IMR-90 (cell line): ENCODE measurements at regions of chr2 and their contacts with region 1.

Region 1: DNA sequence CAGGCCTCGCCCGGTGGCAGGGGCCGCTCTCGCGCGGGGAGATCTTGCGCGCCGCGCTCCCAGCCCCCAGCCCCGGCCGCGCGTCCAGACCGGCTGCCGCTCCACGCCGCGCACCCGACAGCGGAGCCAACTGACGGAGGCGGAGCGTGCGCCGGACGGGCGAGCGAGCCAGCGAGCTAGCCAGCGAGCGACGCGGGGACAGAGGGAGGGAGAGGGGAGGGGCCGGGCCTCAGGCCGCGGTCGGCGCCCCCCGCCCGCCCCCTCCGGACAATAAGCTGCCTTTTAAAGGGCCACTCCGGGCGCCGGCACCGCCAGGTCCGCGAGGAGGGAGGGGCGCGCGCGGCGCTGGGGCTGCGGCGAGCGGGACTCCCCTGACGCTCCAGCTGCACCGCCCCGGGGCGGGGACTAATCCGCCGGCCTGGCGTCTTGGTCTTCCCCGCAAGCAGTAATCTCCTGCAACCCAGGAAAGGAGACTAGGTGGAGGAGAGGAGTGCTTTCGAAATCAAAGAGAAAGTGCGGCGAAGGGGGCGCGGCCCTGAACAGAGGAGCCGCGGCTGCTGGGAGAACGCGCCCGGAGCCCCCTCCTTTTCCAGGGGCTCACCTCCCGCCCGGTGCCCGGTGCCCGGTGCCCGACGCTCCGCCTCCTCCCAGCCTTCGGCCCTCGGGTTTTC is at the start of gene BIN1:
- DNase-seq: peak; percentile 82
- ATAC-seq: peak; percentile 83
- H3K4me3 ChIP-seq: peak within 1 kb of the TSS; percentile 82
- H3K27ac ChIP-seq: peak within 1 kb of the TSS; percentile 85
- H3K4me1 ChIP-seq: peaks cover 13% of the 10 kb centered on the region
- H3K27me3 ChIP-seq: peaks cover 7% of the 10 kb centered on the region
- CTCF ChIP-seq: no peak
- POLR2A ChIP-seq: peak; percentile 65
- RAD21 ChIP-seq: no peak
- total RNA-seq, gene BIN1: 18.1 and 19.7 TPM in 2 replicates

Region 2: GRCh38 chr2:126657636-126658318 is 449.3 kb before region 1 on chr2:
- CTCF ChIA-PET with region 1: no interaction called
- POLR2A ChIA-PET with region 1: no interaction called
- dilution Hi-C with region 1: no loop called
- in situ Hi-C with region 1: no loop called
- intact Hi-C with region 1: loop called (anchors 5 kb)
- DNase-seq: peak; percentile 99
- ATAC-seq: peak; percentile 75
- H3K4me3 ChIP-seq: no peak overlapping the region
- H3K27ac ChIP-seq: peak overlapping the region; percentile 91
- H3K4me1 ChIP-seq: peaks cover 19% of the 10 kb centered on the region
- H3K27me3 ChIP-seq: no peaks in the 10 kb centered on the region
- CTCF ChIP-seq: no peak; the same call in 1 of the 2 replicates
- POLR2A ChIP-seq: no peak; the same call in 1 of the 2 replicates
- RAD21 ChIP-seq: peak; percentile 1; the same call in 1 of the 2 replicates

Region 3: GRCh38 chr2:127064642-127065250 is 42.3 kb before region 1 on chr2:
- CTCF ChIA-PET with region 1: interaction called, 7 read pairs
- POLR2A ChIA-PET with region 1: no interaction called
- dilution Hi-C with region 1: no loop called
- in situ Hi-C with region 1: no loop called
- intact Hi-C with region 1: loop called (anchors 2 kb)
- DNase-seq: peak; percentile 97
- ATAC-seq: peak; percentile 93
- H3K4me3 ChIP-seq: no peak overlapping the region
- H3K27ac ChIP-seq: peak overlapping the region; percentile 78
- H3K4me1 ChIP-seq: peaks cover 16% of the 10 kb centered on the region
- H3K27me3 ChIP-seq: no peaks in the 10 kb centered on the region
- CTCF ChIP-seq: peak; percentile 60
- POLR2A ChIP-seq: peak; percentile 62
- RAD21 ChIP-seq: peak; percentile 73

Region 4: GRCh38 chr2:127080938-127081755 is 25.9 kb before region 1 on chr2:
- CTCF ChIA-PET with region 1: interaction called, 3 read pairs
- POLR2A ChIA-PET with region 1: no interaction called
- dilution Hi-C with region 1: no loop called
- in situ Hi-C with region 1: no loop called
- intact Hi-C with region 1: loop called (anchors 1 kb)
- DNase-seq: no peak
- ATAC-seq: no peak
- H3K4me3 ChIP-seq: no peak overlapping the region
- H3K27ac ChIP-seq: no peak overlapping the region
- H3K4me1 ChIP-seq: peaks cover 49% of the 10 kb centered on the region
- H3K27me3 ChIP-seq: no peaks in the 10 kb centered on the region
- CTCF ChIP-seq: no peak
- POLR2A ChIP-seq: no peak
- RAD21 ChIP-seq: no peak

Region 5: GRCh38 chr2:127143841-127144782 is 37.0 kb after region 1 on chr2:
- CTCF ChIA-PET with region 1: interaction called, 4 read pairs
- POLR2A ChIA-PET with region 1: no interaction called
- dilution Hi-C with region 1: no loop called
- in situ Hi-C with region 1: no loop called
- intact Hi-C with region 1: loop called (anchors 2 kb)
- DNase-seq: peak; percentile 49
- ATAC-seq: peak; percentile 79
- H3K4me3 ChIP-seq: no peak overlapping the region
- H3K27ac ChIP-seq: no peak overlapping the region; the same call in 1 of the 2 replicates
- H3K4me1 ChIP-seq: peaks cover 17% of the 10 kb centered on the region
- H3K27me3 ChIP-seq: no peaks in the 10 kb centered on the region; the same call in 1 of the 2 replicates
- CTCF ChIP-seq: no peak
- POLR2A ChIP-seq: no peak
- RAD21 ChIP-seq: no peak

Region 6: DNA sequence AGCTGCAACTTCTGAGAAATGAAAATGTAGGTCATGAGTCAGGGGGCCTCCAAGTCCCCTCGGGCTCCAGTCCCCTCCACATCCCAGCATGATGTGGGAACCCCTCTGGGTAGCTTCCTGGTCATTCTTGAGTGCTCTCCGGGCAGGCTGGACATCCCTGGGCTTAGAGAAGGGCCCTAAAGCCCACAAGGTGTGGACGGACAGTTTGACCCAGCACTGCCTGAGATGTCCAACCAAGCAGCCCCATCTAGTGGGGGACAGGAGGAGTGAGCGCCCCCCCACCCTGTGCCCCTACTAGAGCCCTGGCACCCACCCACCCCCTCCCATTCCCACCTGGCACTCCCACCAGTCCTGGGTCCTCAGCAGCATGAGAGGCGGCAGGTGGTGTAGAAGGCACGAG is 67.0 kb after region 1 on chr2:
- CTCF ChIA-PET with region 1: no interaction called
- POLR2A ChIA-PET with region 1: no interaction called
- dilution Hi-C with region 1: no loop called
- in situ Hi-C with region 1: no loop called
- intact Hi-C with region 1: loop called (anchors 2 kb)
- DNase-seq: peak; percentile 56
- ATAC-seq: peak; percentile 33; the same call in 1 of the 2 replicates
- H3K4me3 ChIP-seq: no peak overlapping the region
- H3K27ac ChIP-seq: no peak overlapping the region
- H3K4me1 ChIP-seq: peaks cover 20% of the 10 kb centered on the region
- H3K27me3 ChIP-seq: no peaks in the 10 kb centered on the region
- CTCF ChIP-seq: peak; percentile 39
- POLR2A ChIP-seq: no peak
- RAD21 ChIP-seq: peak; percentile 65

Region 7: GRCh38 chr2:127185093-127185492 is 78.0 kb after region 1 on chr2:
- CTCF ChIA-PET with region 1: no interaction called
- POLR2A ChIA-PET with region 1: no interaction called
- dilution Hi-C with region 1: no loop called
- in situ Hi-C with region 1: no loop called
- intact Hi-C with region 1: no loop called
- DNase-seq: no peak
- ATAC-seq: no peak
- H3K4me3 ChIP-seq: no peak overlapping the region
- H3K27ac ChIP-seq: no peak overlapping the region
- H3K4me1 ChIP-seq: no peaks in the 10 kb centered on the region
- H3K27me3 ChIP-seq: peaks cover 28% of the 10 kb centered on the region
- CTCF ChIP-seq: no peak
- POLR2A ChIP-seq: no peak
- RAD21 ChIP-seq: no peak

Region 8: DNA sequence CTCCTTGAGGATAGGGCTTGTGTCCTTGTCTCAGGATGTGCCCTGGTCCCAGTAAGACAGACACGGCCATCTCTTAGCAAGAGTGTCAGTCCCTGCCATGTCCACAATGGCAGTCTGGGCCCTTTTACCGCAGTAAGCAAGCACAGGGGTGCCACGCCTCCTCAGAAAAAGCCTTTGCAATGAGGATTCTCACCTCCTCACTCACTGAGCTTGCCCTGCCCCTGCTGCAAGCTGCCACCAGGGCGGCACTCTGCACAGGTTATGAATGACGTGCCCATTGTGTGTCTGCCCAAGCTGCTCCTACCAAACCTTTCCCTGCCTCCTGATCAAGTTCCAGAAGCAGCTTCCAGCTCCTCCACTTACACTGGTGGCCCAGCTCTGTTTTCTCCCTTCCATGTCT is 163.6 kb after region 1 on chr2:
- CTCF ChIA-PET with region 1: no interaction called
- POLR2A ChIA-PET with region 1: no interaction called
- dilution Hi-C with region 1: no loop called
- in situ Hi-C with region 1: no loop called
- intact Hi-C with region 1: loop called (anchors 5 kb)
- DNase-seq: no peak
- ATAC-seq: no peak
- H3K4me3 ChIP-seq: no peak overlapping the region
- H3K27ac ChIP-seq: no peak overlapping the region
- H3K4me1 ChIP-seq: no peaks in the 10 kb centered on the region
- H3K27me3 ChIP-seq: no peaks in the 10 kb centered on the region
- CTCF ChIP-seq: no peak
- POLR2A ChIP-seq: no peak
- RAD21 ChIP-seq: no peak